ENCODE measurements at regions of chr22 and their contacts with region 1.

Region 1: GRCh38 chr22:29315286-29316131 is at the start of gene RASL10A:
- DNase-seq: peak in 1 of 5 donors; percentile 38
- H3K4me3 ChIP-seq: peak within 1 kb of the TSS; percentile 7
- H3K27ac ChIP-seq: no peak within 1 kb of the TSS
- H3K4me1 ChIP-seq: peaks cover 11% of the 10 kb centered on the region
- H3K27me3 ChIP-seq: no peaks in the 10 kb centered on the region
- CTCF ChIP-seq: no peak
- EP300 ChIP-seq: no peak
- POLR2A ChIP-seq: no peak
- total RNA-seq, gene RASL10A: 0.22 to 0.53 (median 0.41) TPM in 4 of 7 donors, not detected in the others

Region 2: DNA sequence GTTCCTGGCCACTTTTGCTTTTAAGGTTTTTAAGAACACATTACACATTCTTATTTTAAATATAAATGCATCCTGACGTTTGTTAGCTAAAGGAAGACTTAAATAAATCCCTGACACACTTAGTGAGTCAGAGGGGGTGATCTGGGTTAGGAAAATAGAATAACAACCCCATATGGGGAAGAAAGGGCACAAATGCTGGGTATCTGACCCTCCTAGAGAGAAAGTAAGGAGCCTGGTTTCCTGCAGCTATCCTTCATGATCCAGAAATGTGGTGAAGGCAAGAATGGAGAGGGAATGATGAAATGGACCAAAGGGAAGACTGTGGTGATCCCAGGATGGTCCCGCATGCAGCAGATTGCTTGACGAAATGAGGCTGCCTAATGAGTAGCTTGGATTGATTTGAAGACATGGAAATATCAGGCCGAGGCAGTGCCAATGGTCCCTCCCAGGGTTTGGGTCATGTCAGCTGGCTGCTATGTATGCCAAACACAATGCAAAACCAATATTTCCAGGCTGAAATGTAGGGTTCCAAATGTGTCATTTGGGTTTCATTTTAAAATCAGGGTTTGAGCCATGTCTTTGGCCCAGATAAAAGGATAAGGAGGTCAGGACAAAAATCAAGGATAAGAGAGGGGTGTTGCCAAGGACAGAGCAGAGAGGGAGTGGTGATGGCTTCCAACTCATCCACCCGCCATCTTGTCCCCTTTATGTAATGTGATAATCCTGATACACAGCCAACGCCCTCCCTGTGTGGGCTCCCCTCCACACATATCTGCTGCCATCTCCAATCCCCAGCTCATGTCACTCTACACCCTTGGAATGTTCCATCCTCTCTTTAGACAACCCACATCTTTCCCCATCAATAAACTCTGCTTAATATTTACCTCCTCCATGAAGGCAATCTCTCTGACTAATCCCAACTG is 1261.4 kb before region 1 on chr22:
- intact Hi-C with region 1: no loop called
- DNase-seq: no peak
- H3K4me3 ChIP-seq: no peak overlapping the region
- H3K27ac ChIP-seq: no peak overlapping the region
- H3K4me1 ChIP-seq: no peaks in the 10 kb centered on the region
- H3K27me3 ChIP-seq: no peaks in the 10 kb centered on the region
- CTCF ChIP-seq: no peak
- EP300 ChIP-seq: no peak
- POLR2A ChIP-seq: no peak

Region 3: GRCh38 chr22:29375398-29376076 is 60.0 kb after region 1 on chr22:
- intact Hi-C with region 1: loop called in 1 of 4 experiments (anchors 2 kb)
- DNase-seq: no peak
- H3K4me3 ChIP-seq: no peak overlapping the region
- H3K27ac ChIP-seq: no peak overlapping the region
- H3K4me1 ChIP-seq: no peaks in the 10 kb centered on the region
- H3K27me3 ChIP-seq: no peaks in the 10 kb centered on the region
- CTCF ChIP-seq: no peak
- EP300 ChIP-seq: no peak
- POLR2A ChIP-seq: no peak